Activated CD8-positive, alpha-beta T cell treated with anti-CD3 and anti-CD28 coated beads for 36 hours (primary cell): ENCODE measurements at regions of chr4 and their contacts with region 1.

Region 1: DNA sequence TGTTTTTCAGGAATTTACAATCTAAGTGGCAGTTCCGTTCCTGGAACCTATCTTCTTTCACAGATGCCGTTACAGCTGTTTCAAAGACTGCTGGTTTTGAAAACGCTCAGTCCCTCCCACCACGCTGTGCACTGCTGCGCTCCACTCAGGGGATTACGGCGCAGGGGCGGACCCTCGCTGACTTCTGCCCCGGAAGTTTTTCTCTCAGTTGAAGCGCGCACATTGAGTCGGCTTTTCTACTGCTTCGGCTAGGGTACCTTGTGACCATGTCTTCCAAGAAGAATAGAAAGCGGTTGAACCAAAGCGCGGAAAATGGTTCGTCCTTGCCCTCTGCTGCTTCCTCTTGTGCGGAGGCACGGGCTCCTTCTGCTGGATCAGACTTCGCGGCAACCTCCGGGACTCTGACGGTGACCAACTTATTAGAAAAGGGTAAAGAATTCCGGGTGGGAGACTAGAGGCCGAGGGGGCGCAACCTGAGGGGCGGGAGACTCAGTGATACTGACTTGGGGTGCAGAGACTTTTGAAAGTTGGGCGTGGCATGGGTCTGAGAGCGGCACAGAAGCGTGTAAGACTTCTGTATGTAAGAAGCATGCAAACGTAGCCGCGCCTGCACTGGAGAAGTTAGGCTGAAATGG is 597 bp upstream of the NUDT6 start:
- DNase-seq: peak; percentile 94
- ATAC-seq: peak; percentile 97
- H3K4me3 Mint-ChIP-seq: no peak overlapping the region
- H3K27ac Mint-ChIP-seq: peak overlapping the region; percentile 96
- H3K4me1 Mint-ChIP-seq: peaks cover 12% of the 10 kb centered on the region
- H3K27me3 Mint-ChIP-seq: no peaks in the 10 kb centered on the region
- CTCF ChIP-seq: no peak

Region 2: GRCh38 chr4:122602277-122603142 is 320.5 kb before region 1 on chr4:
- CTCF ChIA-PET with region 1: interaction called, 4 read pairs
- POLR2A ChIA-PET with region 1: no interaction called
- intact Hi-C with region 1: loop called (anchors 10 kb)
- DNase-seq: no peak
- ATAC-seq: peak; percentile 69
- H3K4me3 Mint-ChIP-seq: no peak overlapping the region
- H3K27ac Mint-ChIP-seq: no peak overlapping the region
- H3K4me1 Mint-ChIP-seq: no peaks in the 10 kb centered on the region
- H3K27me3 Mint-ChIP-seq: peaks cover 15% of the 10 kb centered on the region
- CTCF ChIP-seq: peak; percentile 42